ENCODE measurements at regions of chr18 and their contacts with region 1.

Region 1: GRCh38 chr18:23213200-23213599 is 77.9 kb downstream of the CABLES1 start:
- DNase-seq: no peak
- H3K4me3 ChIP-seq: no peak overlapping the region
- H3K27ac ChIP-seq: no peak overlapping the region
- H3K4me1 ChIP-seq: peaks cover 18% of the 10 kb centered on the region
- H3K27me3 ChIP-seq: no peaks in the 10 kb centered on the region
- CTCF ChIP-seq: no peak
- EP300 ChIP-seq: no peak
- POLR2A ChIP-seq: no peak

Region 2: DNA sequence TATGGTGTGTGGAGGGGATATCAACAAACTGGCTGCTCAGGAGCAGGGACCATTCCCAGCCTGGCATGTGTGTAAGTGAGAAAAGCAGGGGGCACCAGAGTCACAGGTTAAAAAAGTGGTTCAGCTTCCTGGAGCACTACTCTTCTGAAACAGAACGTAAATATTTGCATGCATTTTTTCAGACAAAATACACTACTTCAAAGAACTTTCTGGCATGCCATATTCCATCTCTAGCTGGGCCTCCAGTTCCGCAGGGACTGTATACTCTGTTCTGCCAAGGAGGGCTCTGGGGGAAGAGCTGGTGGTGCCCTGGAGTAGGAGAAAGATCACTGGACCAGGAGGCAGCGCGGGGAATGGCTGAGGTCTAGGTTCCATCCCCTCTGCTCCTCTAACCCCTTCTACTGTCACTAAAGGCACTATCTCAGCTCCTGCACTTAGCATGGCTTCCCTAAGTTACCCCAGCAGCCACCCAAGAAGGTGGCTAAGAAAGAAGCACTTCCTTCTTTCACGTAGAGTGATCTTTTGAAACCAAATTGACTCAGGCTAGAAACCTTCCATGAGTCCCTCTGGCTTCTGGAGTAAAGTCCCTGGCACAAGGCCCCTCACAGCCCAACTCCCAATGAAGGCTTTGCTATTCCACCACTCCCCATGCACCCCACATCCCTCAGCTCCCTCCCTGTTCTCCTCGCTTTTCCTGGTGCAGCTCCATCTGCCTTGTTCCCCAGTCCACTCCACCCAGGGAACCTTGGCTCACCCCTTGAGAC is 135.5 kb before region 1 on chr18:
- intact Hi-C with region 1: no loop called
- DNase-seq: no peak
- H3K4me3 ChIP-seq: no peak overlapping the region
- H3K27ac ChIP-seq: no peak overlapping the region
- H3K4me1 ChIP-seq: no peaks in the 10 kb centered on the region
- H3K27me3 ChIP-seq: no peaks in the 10 kb centered on the region
- CTCF ChIP-seq: no peak
- EP300 ChIP-seq: no peak
- POLR2A ChIP-seq: no peak

Region 3: DNA sequence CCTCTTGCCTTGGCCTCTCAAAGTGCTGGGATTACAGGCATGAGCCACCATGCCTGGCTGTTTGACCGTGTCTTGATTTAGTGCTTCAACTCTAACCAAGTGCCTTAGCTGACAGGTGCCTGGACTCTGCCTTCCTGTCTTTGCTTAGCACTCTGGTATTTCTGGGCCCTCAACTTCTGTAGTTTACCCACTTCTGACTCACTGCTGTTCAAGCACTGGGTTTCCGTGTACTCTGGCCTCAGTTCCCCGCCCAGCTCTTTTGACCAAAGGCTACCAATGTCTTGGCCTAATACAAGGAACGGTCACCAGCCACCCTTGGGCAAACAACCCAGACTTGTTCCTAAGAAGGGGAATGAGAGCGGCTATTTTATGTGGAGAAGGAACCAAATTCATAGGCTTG is 113.6 kb before region 1 on chr18:
- intact Hi-C with region 1: no loop called
- DNase-seq: no peak
- H3K4me3 ChIP-seq: no peak overlapping the region
- H3K27ac ChIP-seq: no peak overlapping the region
- H3K4me1 ChIP-seq: no peaks in the 10 kb centered on the region
- H3K27me3 ChIP-seq: no peaks in the 10 kb centered on the region
- CTCF ChIP-seq: no peak
- EP300 ChIP-seq: no peak
- POLR2A ChIP-seq: no peak

Region 4: DNA sequence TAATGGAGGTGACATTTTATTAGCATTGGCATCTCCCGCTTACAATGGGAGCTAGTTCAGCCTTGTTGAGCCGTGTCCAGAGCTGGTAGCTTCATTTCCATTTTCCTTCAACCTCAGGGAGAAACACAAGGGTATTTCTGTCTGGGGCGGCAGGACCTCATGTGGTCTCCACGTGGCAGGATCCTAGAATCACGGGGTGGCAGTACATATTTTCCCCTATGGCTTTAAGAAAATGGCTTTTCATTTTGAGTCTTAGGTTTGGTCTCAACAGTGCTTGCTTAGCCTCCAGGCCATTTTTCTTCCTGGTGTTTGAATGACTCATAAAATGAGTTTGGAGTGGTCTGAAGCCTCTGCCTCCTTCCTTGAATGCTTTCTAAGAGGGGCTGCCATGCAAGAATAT is 57.7 kb before region 1 on chr18:
- intact Hi-C with region 1: loop called in 1 of 4 experiments (anchors 2 kb)
- DNase-seq: no peak
- H3K4me3 ChIP-seq: no peak overlapping the region
- H3K27ac ChIP-seq: no peak overlapping the region
- H3K4me1 ChIP-seq: no peaks in the 10 kb centered on the region
- H3K27me3 ChIP-seq: no peaks in the 10 kb centered on the region
- CTCF ChIP-seq: no peak
- EP300 ChIP-seq: no peak
- POLR2A ChIP-seq: no peak

Measured in ovary (tissue), 10 donors.